ENCODE measurements at regions of chr2 and their contacts with region 1.

Region 1: GRCh38 chr2:191811807-191812602 is 34.9 kb downstream of the CAVIN2 start:
- DNase-seq: peak; percentile 49 to 76 (median 75)
- H3K4me3 ChIP-seq: no peak overlapping the region
- H3K27ac ChIP-seq: no peak overlapping the region
- H3K4me1 ChIP-seq: no peaks in the 10 kb centered on the region
- H3K27me3 ChIP-seq: no peaks in the 10 kb centered on the region
- CTCF ChIP-seq: peak; percentile 68 to 81 (median 74)
- EP300 ChIP-seq: no peak
- POLR2A ChIP-seq: no peak

Region 2: DNA sequence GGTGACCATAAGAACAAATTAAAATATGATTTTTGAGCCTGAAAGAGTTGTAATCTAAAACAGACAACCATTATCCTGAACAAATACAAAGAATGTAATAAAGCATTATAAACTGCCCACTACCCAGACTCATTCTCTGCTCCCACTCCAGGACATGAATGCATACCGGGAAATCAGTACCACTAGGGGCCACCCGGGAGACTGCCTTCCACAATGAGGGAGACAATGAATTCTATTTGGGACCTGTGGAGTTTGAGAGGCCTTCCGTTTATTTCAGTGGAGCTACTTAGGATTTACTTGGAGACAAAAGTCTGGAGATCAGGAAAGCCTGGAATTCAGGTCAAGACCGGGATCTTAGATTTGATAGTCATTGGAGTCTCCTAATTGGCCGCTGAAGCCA is 1113.1 kb before region 1 on chr2:
- intact Hi-C with region 1: no loop called
- DNase-seq: no peak
- H3K4me3 ChIP-seq: no peak overlapping the region
- H3K27ac ChIP-seq: no peak overlapping the region
- H3K4me1 ChIP-seq: no peaks in the 10 kb centered on the region
- H3K27me3 ChIP-seq: no peaks in the 10 kb centered on the region
- CTCF ChIP-seq: no peak
- EP300 ChIP-seq: no peak
- POLR2A ChIP-seq: no peak

Region 3: DNA sequence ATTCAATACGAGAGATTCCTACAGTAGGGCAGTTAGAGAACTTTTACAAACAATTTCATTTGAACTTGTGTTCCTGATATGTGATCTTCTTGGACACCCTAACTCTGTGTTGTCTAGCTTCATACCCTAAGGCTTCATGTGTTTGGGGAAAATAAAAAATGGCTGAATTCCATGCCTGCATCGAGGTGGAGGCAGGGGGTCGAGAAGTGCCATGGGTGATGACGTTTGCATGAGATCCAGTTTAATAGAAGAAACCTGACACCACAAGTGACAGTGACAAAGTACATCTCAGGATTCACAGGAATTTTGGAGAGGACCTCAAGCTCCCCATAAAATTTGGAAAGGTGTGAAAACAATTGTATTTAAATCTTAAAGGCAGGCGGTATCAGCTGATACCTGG is 303.3 kb before region 1 on chr2:
- intact Hi-C with region 1: no loop called
- DNase-seq: no peak
- H3K4me3 ChIP-seq: no peak overlapping the region
- H3K27ac ChIP-seq: no peak overlapping the region
- H3K4me1 ChIP-seq: no peaks in the 10 kb centered on the region
- H3K27me3 ChIP-seq: no peaks in the 10 kb centered on the region
- CTCF ChIP-seq: no peak
- EP300 ChIP-seq: no peak
- POLR2A ChIP-seq: no peak

Region 4: DNA sequence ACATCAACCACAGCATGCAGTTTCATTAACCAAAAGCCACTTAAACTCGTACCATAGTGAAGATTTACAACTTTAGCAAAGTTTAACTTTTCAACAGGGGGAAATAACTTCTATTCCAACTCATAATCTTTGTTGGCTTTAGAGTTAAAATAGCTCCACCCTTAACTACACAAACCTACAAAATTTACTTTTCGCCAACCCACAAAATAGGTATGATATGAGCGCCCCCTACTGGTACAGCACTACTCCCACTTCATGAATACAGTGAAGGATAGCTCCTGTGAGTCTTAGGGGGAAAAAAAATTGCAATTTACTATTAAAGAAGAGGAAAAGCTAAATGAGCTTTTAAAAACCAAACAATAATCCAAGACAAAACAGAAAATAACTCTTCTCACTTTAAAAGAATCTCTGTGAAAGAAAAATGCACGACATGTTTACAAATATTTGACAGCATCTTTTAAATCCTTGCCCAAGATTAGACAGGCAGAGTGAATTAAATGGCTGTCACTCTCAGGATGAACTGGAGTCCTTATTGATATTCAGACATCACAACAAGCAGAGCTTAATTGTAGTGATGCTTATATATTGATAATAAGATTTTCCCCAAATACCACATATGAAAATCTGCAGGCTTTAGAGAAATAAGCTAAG is 350.5 kb after region 1 on chr2:
- intact Hi-C with region 1: loop called (anchors 2 to 5 kb)
- DNase-seq: peak; percentile 38 to 79 (median 55)
- H3K4me3 ChIP-seq: no peak overlapping the region
- H3K27ac ChIP-seq: no peak overlapping the region
- H3K4me1 ChIP-seq: no peaks in the 10 kb centered on the region
- H3K27me3 ChIP-seq: no peaks in the 10 kb centered on the region
- CTCF ChIP-seq: peak; percentile 73 to 95 (median 95)
- EP300 ChIP-seq: no peak
- POLR2A ChIP-seq: no peak